Breast epithelium (tissue), 4 donors: ENCODE measurements at regions of chr12 and their contacts with region 1.

Region 1: GRCh38 chr12:107564946-107565345 is 120.7 kb upstream of the PWP1 start:
- DNase-seq: no peak
- H3K4me3 ChIP-seq: no peak overlapping the region
- H3K27ac ChIP-seq: no peak overlapping the region
- H3K4me1 ChIP-seq: no peaks in the 10 kb centered on the region
- H3K27me3 ChIP-seq: no peaks in the 10 kb centered on the region
- CTCF ChIP-seq: no peak
- POLR2A ChIP-seq: no peak

Region 2: GRCh38 chr12:106564678-106565329 is 1000.1 kb before region 1 on chr12:
- intact Hi-C with region 1: loop called (anchors 5 kb)
- DNase-seq: no peak
- H3K4me3 ChIP-seq: no peak overlapping the region
- H3K27ac ChIP-seq: no peak overlapping the region
- H3K4me1 ChIP-seq: no peaks in the 10 kb centered on the region
- H3K27me3 ChIP-seq: peaks cover 0 to 12% of the 10 kb centered on the region in 2 donors
- CTCF ChIP-seq: no peak
- POLR2A ChIP-seq: no peak

Region 3: GRCh38 chr12:106831699-106832098 is 733.2 kb before region 1 on chr12:
- intact Hi-C with region 1: no loop called
- DNase-seq: no peak
- H3K4me3 ChIP-seq: no peak overlapping the region
- H3K27ac ChIP-seq: no peak overlapping the region
- H3K4me1 ChIP-seq: no peaks in the 10 kb centered on the region
- H3K27me3 ChIP-seq: no peaks in the 10 kb centered on the region
- CTCF ChIP-seq: no peak
- POLR2A ChIP-seq: no peak

Region 4: DNA sequence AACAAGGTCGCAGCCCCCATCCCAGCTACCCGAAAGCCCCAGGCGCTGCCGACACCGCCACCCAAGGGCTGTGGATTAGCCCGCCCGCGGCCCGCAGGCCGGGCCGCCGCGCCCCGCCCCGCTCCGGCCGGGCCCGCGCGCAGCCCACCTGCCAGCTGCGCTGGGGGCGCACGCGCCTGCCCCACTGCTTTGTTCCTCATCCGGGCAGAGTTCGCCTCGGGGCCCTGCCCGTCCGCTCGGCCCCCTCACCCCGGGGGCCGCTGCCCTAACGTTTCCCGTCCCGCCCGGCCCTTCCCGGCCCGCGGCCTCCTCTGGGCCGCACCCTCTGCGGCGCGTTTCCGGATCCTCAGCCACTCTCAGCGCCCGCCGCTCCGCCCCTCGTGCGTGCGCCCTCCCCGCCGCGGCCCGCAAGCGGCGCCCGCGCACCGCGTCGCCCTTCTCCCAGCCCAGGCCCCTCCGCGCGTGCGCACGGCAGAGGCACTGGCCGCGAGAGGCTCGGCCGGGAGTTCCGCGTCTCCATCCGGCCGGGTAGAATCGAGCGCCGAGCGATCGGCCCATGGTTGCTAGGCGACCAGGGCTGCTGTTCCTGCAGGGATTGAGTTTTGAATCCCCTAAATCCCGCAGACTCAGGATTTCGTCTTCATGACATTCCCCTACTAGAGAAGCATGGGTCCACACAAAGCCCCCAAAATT is 196.0 kb after region 1 on chr12 and contains the start of gene PRDM4:
- intact Hi-C with region 1: no loop called
- DNase-seq: peak; percentile 89 to 92
- H3K4me3 ChIP-seq: peak within 1 kb of the TSS; percentile 82 to 93 (median 92)
- H3K27ac ChIP-seq: peak within 1 kb of the TSS; percentile 80 to 91
- H3K4me1 ChIP-seq: no peaks in the 10 kb centered on the region
- H3K27me3 ChIP-seq: no peaks in the 10 kb centered on the region
- CTCF ChIP-seq: no peak
- POLR2A ChIP-seq: no peak
- total RNA-seq, gene PRDM4: 29.4 to 32.6 (median 31.1) TPM